Activated B cell treated with CpG ODN at 0.5 μM for 24 hours (primary cell): ENCODE measurements at regions of chr10 and their contacts with region 1.

Region 1: DNA sequence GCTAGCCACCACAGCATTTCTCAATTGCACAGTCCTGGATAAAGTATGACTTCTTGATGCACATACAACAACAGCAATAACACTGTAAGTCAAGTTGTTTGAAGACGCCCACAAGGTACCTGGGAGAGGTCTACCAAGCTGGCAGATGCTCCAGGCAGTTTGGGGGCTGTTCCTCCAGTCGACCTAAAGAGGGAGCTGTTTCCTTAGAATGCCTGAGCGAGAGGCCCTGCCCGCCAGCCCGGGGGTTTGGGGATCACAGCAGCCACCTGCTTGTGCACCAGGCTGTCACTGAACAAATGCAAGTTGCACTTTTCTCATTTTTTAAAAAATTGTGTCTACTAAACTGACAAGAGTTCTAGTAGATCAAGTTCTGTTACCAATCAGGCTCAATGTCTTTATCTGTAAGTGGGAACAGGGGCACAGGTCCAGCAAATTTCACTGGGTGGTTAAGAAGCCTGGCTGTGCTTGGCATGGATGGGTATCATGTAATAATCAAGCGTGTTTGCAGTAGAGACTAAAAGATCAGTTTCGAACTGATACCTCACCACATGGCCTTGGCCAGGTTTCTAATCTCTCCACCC is 193.8 kb upstream of the ADO start:
- DNase-seq: peak; percentile 37
- ATAC-seq: peak; percentile 95
- H3K4me3 Mint-ChIP-seq: no peak overlapping the region
- H3K27ac Mint-ChIP-seq: peak overlapping the region; percentile 30
- H3K4me1 Mint-ChIP-seq: peaks cover 15% of the 10 kb centered on the region
- H3K27me3 Mint-ChIP-seq: no peaks in the 10 kb centered on the region
- CTCF ChIP-seq: peak; percentile 38

Region 2: GRCh38 chr10:62437696-62438095 is 173.0 kb before region 1 on chr10:
- CTCF ChIA-PET with region 1: interaction called, 24 read pairs
- POLR2A ChIA-PET with region 1: no interaction called
- intact Hi-C with region 1: loop called (anchors 1 kb)
- DNase-seq: no peak
- ATAC-seq: peak; percentile 70
- H3K4me3 Mint-ChIP-seq: no peak overlapping the region
- H3K27ac Mint-ChIP-seq: no peak overlapping the region
- H3K4me1 Mint-ChIP-seq: peaks cover 2% of the 10 kb centered on the region
- H3K27me3 Mint-ChIP-seq: no peaks in the 10 kb centered on the region
- CTCF ChIP-seq: peak; percentile 90

Region 3: GRCh38 chr10:62594093-62594520 is 16.6 kb before region 1 on chr10:
- CTCF ChIA-PET with region 1: interaction called, 16 read pairs
- POLR2A ChIA-PET with region 1: no interaction called
- intact Hi-C with region 1: no loop called
- DNase-seq: peak; percentile 41
- ATAC-seq: peak; percentile 88
- H3K4me3 Mint-ChIP-seq: no peak overlapping the region
- H3K27ac Mint-ChIP-seq: no peak overlapping the region
- H3K4me1 Mint-ChIP-seq: peaks cover 16% of the 10 kb centered on the region
- H3K27me3 Mint-ChIP-seq: no peaks in the 10 kb centered on the region
- CTCF ChIP-seq: peak; percentile 74

Region 4: DNA sequence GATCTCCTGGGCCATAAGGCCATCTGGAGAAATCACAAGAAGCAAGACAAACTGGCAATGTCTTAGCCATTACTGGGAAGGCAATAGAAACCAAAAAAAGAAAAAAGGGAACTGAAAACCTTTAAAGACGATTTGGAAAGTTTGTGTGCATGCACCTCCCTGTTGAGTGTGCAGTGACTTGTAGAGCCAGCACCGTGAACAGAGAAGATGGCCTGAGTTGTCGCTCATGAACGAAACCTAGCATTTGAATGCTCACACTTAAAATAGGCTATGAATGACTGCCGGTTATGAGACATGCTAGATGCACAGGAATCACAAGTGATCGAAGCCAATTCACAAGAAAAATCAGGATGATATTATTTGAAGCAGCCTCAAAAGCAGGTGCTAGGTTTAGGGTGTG is 42.5 kb after region 1 on chr10:
- CTCF ChIA-PET with region 1: interaction called, 3 read pairs
- POLR2A ChIA-PET with region 1: no interaction called
- intact Hi-C with region 1: loop called (anchors 2 kb)
- DNase-seq: no peak
- ATAC-seq: peak; percentile 92
- H3K4me3 Mint-ChIP-seq: peak overlapping the region; percentile 55
- H3K27ac Mint-ChIP-seq: peak overlapping the region; percentile 87
- H3K4me1 Mint-ChIP-seq: peaks cover 66% of the 10 kb centered on the region
- H3K27me3 Mint-ChIP-seq: peaks cover 1% of the 10 kb centered on the region
- CTCF ChIP-seq: no peak

Region 5: GRCh38 chr10:62779487-62780248 is 168.9 kb after region 1 on chr10:
- CTCF ChIA-PET with region 1: interaction called, 10 read pairs
- POLR2A ChIA-PET with region 1: no interaction called
- intact Hi-C with region 1: no loop called
- DNase-seq: peak; percentile 40
- ATAC-seq: peak; percentile 99
- H3K4me3 Mint-ChIP-seq: peak overlapping the region; percentile 50
- H3K27ac Mint-ChIP-seq: peak overlapping the region; percentile 76
- H3K4me1 Mint-ChIP-seq: peaks cover 33% of the 10 kb centered on the region
- H3K27me3 Mint-ChIP-seq: no peaks in the 10 kb centered on the region
- CTCF ChIP-seq: no peak

Region 6: DNA sequence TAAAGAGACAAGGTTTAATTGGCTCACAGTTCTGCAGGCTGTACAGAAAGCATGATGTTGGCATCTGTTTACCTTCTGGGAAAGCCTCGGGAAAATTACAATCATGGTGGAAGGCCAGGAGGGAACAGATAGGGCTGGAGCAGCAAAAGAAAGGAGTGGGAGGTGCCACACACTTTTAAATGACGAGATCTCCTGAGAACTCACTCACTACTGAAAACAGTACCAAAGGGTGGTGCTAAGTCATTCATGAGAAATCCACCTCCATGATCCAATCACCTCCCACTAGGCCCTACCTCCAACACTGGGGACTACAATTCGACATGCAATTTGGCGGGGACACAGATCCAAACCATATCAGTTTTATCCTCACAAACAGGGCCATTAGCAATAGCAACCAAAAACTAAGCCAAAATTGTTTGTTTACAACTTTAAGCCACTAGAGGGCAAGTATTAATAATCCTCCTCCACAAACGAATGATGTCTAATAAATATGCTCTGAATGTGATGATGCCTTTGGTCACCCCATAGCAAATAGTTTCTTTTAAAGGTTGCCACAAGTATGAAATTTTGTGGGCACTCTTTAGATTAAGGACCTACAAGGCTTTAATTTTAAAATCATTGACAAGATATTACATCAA is 393.2 kb after region 1 on chr10:
- CTCF ChIA-PET with region 1: interaction called, 3 read pairs
- POLR2A ChIA-PET with region 1: no interaction called
- intact Hi-C with region 1: loop called (anchors 2 kb)
- DNase-seq: no peak
- ATAC-seq: no peak
- H3K4me3 Mint-ChIP-seq: no peak overlapping the region
- H3K27ac Mint-ChIP-seq: no peak overlapping the region
- H3K4me1 Mint-ChIP-seq: no peaks in the 10 kb centered on the region
- H3K27me3 Mint-ChIP-seq: peaks cover 12% of the 10 kb centered on the region
- CTCF ChIP-seq: no peak

Region 7: GRCh38 chr10:63157845-63158624 is 547.3 kb after region 1 on chr10:
- CTCF ChIA-PET with region 1: interaction called, 22 read pairs
- POLR2A ChIA-PET with region 1: no interaction called
- intact Hi-C with region 1: loop called (anchors 1 kb)
- DNase-seq: no peak
- ATAC-seq: peak; percentile 67
- H3K4me3 Mint-ChIP-seq: no peak overlapping the region
- H3K27ac Mint-ChIP-seq: no peak overlapping the region
- H3K4me1 Mint-ChIP-seq: peaks cover 9% of the 10 kb centered on the region
- H3K27me3 Mint-ChIP-seq: no peaks in the 10 kb centered on the region
- CTCF ChIP-seq: no peak